Activated T-helper 1 cell treated with anti-CD3 and anti-CD28 coated beads, Interleukin-12 subunit alpha, Interleukin-12 subunit beta, Interleukin-2, Interleukin-4 antibody, amounts not matched to agents 30 ng/mL and 10 ng/mL and 1 ng/mL, durations not matched to agents 14 hours and 24 hours and 36 hours (primary cell): ENCODE measurements at regions of chr19 and their contacts with region 1.

Region 1: DNA sequence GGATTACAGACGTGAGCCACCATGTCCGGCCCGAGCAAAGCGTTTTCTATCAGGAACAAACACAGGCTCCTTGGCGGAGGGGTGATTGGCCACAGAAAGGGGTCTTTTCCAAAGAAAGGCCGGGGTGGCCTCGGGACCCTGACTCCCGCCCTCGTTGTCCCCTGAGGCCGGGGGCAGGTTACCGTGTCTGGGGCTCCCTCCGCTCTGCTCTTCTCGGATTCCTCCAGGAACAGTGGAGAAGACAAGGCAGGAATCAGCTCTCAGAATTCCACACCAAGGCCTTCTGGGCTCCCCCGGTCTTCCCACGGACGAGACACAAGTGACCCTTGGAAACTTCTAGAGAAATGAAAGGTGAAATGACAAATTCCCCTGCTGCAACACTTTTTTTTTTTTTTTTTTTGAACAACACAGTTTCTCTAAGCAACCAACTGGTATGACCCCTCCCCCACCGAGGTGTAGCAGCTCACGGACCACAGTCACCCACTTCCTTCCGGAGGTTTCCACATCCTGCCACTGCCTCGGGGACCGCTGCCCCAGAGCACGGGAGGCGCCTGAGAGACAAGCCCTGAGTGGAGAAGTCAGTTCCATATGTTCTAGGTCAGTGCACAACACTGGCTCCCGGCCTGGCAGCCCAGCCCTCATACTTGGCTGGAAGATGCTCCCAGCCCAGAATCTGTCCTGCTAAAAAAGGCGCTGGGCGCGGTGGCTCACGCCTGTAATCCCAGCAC is 11.0 kb downstream of the MOB3A start:
- DNase-seq: peak; percentile 96
- H3K4me3 Mint-ChIP-seq: peak overlapping the region; percentile 94
- H3K27ac Mint-ChIP-seq: peak overlapping the region; percentile 96
- H3K4me1 Mint-ChIP-seq: peaks cover 69% of the 10 kb centered on the region
- H3K27me3 Mint-ChIP-seq: peaks cover 2% of the 10 kb centered on the region

Region 2: DNA sequence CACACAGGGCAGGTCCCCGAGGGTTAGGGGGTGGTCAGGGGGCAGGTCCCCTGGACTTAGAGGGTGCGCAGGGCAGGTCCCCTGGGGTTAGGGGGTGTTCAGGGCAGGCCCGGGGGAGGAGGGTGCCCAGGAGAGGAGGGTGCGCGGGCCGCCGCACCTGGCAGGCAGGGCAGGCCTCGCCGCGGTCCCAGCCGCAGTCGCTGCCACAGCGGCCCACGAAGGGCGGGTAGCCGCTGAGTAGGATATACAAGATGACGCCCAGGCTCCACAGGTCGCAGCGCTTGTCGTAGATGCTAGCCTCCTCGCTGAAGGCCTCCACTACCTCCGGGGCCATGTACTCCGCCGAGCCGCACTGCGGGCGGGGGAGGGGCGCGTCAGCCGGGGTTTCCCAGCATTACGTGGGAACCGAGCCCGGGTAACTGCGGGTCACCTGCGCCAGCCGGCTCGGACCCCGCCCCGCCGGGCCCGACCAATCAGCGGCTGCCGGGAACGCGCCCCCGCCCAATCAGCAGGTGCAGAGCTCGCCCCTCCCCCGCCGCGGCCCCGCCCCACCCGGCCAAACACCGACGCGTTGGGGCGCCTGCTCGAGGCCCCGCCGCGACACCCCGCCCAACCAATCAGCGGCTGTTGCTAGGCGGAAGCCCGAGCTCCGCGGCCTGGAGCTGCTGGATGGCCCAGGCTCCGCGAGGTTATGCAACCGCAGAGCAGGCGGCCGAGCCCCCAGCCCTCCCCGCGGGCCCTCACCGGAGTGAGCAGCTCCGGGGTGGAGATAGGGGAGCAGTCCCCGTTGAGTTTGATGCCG is 43.3 kb before region 1 on chr19:
- intact Hi-C with region 1: loop called (anchors 1 kb)
- DNase-seq: peak; percentile 99
- H3K4me3 Mint-ChIP-seq: peak overlapping the region; percentile 81
- H3K27ac Mint-ChIP-seq: peak overlapping the region; percentile 87
- H3K4me1 Mint-ChIP-seq: peaks cover 4% of the 10 kb centered on the region
- H3K27me3 Mint-ChIP-seq: no peaks in the 10 kb centered on the region

Region 3: GRCh38 chr19:2282062-2282861 is 197.1 kb after region 1 on chr19 and contains the start of gene PEAK3:
- intact Hi-C with region 1: no loop called
- DNase-seq: peak; percentile 36
- H3K4me3 Mint-ChIP-seq: peak within 1 kb of the TSS; percentile 59
- H3K27ac Mint-ChIP-seq: peak within 1 kb of the TSS; percentile 61
- H3K4me1 Mint-ChIP-seq: peaks cover 9% of the 10 kb centered on the region
- H3K27me3 Mint-ChIP-seq: no peaks in the 10 kb centered on the region
- total RNA-seq, gene PEAK3: 0.07 and 0.16 TPM in 2 replicates